PC-9 (cell line): ENCODE measurements at regions of chr4 and their contacts with region 1.

Region 1: DNA sequence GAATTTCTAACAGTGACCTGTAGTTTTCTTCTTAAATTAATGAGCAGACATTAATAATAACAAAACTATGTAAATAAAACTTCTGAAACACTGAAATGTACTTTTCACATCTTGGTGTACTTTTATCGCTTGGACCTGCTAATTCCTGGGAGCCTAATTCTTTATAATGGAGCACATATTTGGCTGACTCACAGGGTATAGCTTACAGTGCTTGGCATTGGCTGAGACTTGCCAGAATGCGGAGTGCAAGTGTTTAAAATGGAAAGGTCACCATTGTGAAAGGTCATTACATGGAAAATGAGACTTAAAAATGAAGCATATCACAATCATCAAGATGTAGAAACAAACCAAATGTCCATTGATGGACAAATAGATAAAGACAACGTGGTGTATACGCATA is 137.3 kb upstream of the PDLIM3 start:
- DNase-seq: no peak
- H3K4me3 ChIP-seq: no peak overlapping the region
- H3K27ac ChIP-seq: no peak overlapping the region
- H3K4me1 ChIP-seq: no peaks in the 10 kb centered on the region
- H3K27me3 ChIP-seq: no peaks in the 10 kb centered on the region
- CTCF ChIP-seq: no peak

Region 2: DNA sequence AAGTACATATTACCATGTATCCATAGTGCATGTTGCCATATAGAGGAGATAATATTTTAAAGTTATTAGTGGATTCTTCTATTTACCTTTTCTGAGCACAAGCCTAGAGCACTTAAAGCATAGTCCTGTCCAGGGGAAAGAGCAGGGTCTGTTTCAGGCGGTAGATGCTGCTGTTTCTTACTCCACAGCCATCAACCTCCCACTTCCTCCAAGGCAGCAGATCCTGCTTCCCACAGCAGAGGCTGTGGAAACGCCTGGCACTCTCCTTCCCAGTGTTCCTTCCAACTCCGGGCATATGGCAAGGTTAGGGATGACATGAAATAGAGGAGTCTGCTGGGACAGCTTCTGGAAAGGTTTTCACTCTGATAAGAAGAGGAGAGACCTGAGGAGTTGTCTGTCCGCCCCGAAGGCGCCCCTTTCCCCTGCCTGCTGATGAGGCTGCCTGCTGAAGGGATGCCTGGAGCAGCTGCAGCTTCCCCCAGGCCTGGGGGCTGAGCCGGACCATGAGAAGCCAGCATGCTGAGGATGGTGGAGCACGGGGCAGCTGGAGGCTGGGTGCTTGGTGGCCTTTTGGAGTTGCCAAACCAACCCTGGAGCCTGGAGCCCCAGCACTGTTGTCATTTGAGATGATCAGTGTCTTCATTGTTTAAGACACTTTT is 573.5 kb before region 1 on chr4:
- CTCF ChIA-PET with region 1: no interaction called
- POLR2A ChIA-PET with region 1: no interaction called
- intact Hi-C with region 1: no loop called
- DNase-seq: no peak
- H3K4me3 ChIP-seq: no peak overlapping the region
- H3K27ac ChIP-seq: no peak overlapping the region
- H3K4me1 ChIP-seq: no peaks in the 10 kb centered on the region
- H3K27me3 ChIP-seq: no peaks in the 10 kb centered on the region
- CTCF ChIP-seq: no peak

Region 3: DNA sequence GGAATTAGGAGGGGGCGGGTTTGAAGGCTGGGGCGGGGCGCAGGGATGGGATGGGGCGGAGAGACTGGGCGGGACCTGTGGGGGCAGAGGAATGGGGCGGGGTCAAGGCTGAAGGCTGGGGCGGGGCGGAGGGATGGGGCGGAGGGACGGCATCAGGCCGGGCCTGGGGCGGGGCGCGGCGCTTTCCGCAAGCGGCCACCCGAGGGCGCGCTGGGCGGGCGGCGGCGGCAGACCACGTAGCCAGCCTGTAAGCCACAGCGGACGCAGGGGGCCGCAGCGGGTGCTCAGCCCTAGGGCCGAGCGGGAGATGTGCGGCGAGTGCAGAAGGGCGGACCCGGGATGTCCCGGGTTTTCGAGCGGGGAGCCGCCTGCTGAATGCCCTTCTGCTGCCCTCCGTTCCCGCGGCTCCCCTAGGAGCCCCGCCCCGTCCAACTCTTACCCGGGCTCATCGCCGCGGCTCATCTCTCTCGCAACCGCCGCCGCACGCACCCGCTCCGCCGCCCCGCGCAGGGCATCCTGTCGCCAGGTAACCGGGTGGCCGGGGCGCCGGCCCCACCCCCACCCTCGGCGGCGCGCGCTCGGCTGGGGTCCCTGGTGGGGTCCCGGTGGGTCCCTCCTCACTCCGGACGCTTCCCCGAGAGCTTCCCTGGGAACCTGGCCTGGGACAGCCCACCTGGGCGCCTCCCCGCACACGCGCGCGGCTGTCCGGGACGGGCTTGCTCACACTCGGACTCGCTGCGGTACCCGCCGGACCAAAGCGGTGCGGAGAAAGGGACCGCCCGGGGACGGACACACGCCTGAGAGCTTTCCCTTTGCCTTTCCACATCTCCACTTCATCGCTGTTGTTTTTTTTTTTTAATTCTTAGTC is 201.1 kb before region 1 on chr4 and contains the start of gene CCDC110:
- CTCF ChIA-PET with region 1: no interaction called
- POLR2A ChIA-PET with region 1: no interaction called
- intact Hi-C with region 1: no loop called
- DNase-seq: peak; percentile 46 to 91
- H3K4me3 ChIP-seq: peak within 1 kb of the TSS; percentile 73
- H3K27ac ChIP-seq: no peak within 1 kb of the TSS
- H3K4me1 ChIP-seq: 0 out of 2 replicates have a peak, but pooled peaks cover 4% of the 10 kb centered on the region
- H3K27me3 ChIP-seq: no peaks in the 10 kb centered on the region
- CTCF ChIP-seq: peak; percentile 52; the same call in 1 of the 2 replicates
- total RNA-seq, gene CCDC110: 2.1 and 4.3 TPM in 2 replicates

Region 4: DNA sequence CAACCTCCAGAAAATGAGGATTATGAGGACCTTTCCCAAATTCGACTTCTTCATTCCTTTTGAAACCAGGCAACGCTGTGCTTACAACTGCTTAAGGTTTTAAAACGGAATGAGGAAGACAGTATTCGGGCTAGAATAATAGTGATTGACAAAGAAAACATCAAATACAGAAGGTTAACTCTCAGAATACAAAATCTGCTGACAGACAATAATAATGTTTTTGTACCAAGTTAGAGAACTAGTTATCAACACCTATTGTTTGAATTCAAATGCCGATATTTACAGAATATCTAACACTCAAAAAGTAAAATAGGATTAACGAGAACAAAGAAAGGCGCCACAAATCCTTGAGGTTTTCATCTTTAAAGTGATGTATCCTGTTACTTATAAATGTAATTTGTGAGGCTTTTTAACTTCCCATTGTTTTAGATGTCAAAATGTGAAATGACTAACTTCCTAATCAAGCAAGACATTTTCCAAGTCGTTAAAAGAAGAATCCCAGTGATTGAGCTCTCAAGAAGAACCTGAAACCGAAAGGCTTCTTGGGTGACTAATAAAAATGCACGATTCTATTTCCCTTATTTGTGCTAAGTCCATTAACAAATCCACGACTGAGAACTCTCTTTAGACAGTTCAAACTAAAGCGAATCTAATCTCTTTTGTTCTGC is 21.1 kb after region 1 on chr4:
- CTCF ChIA-PET with region 1: no interaction called
- POLR2A ChIA-PET with region 1: no interaction called
- intact Hi-C with region 1: loop called (anchors 1 kb)
- DNase-seq: no peak
- H3K4me3 ChIP-seq: no peak overlapping the region
- H3K27ac ChIP-seq: no peak overlapping the region
- H3K4me1 ChIP-seq: no peaks in the 10 kb centered on the region
- H3K27me3 ChIP-seq: no peaks in the 10 kb centered on the region
- CTCF ChIP-seq: no peak